ENCODE measurements at regions of chr13 and their contacts with region 1.

Region 1: DNA sequence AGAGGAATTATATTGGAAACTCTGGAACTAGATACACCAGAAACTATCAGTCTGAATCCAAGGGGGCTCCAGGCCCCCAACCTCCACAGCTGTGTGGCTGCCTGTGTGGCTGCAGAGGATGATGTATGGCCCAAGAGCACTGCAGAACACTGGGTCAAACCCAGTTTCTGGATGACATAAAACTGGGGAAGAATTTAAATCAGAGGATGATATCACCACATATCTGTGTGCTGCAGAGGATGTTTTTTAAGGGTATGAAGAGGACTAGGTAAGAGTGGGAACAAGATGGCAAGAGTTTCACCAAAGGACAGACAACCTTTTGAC is 226.4 kb downstream of the SUCLA2 start:
- DNase-seq: no peak
- ATAC-seq: no peak
- H3K4me3 ChIP-seq: no peak overlapping the region
- H3K27ac ChIP-seq: no peak overlapping the region
- H3K4me1 ChIP-seq: no peaks in the 10 kb centered on the region
- H3K27me3 ChIP-seq: no peaks in the 10 kb centered on the region
- CTCF ChIP-seq: no peak

Region 2: GRCh38 chr13:46759846-46760245 is 1014.8 kb before region 1 on chr13:
- CTCF ChIA-PET with region 1: no interaction called
- POLR2A ChIA-PET with region 1: no interaction called
- in situ Hi-C with region 1: no loop called
- intact Hi-C with region 1: loop called (anchors 10 kb)
- DNase-seq: no peak
- ATAC-seq: no peak
- H3K4me3 ChIP-seq: no peak overlapping the region
- H3K27ac ChIP-seq: no peak overlapping the region
- H3K4me1 ChIP-seq: no peaks in the 10 kb centered on the region
- H3K27me3 ChIP-seq: no peaks in the 10 kb centered on the region
- CTCF ChIP-seq: no peak

Region 3: DNA sequence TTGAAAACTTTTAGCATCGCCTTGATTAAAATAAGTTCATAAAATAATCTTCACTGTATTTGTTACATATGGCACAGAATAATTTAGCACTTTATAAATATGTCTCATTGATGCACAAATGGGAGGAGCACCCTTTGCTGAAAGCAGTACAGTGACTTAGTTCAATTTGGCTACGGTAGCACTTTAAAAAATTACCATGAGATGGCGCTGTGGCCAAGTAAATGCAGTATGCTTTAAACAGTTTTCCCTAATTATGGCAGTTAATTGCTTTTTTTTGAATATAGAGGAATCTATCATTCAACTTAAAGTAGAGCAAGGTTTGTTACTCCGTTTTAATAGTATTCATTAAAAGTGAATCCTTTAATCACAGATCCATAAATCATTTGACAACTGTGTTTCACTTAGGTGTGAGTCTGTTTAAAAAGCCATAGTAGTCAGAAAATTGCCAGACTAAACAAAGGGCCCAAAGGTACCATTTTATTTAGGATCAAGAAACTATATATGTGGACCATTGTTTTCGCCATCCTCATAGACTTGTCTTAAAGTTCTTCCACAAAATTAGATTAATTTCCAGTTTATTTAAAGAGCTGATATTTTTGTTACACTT is 942.9 kb before region 1 on chr13:
- CTCF ChIA-PET with region 1: no interaction called
- POLR2A ChIA-PET with region 1: no interaction called
- in situ Hi-C with region 1: no loop called
- intact Hi-C with region 1: loop called (anchors 5 kb)
- DNase-seq: peak; percentile 32
- ATAC-seq: no peak; the same call in 1 of the 2 replicates
- H3K4me3 ChIP-seq: no peak overlapping the region
- H3K27ac ChIP-seq: no peak overlapping the region
- H3K4me1 ChIP-seq: no peaks in the 10 kb centered on the region
- H3K27me3 ChIP-seq: no peaks in the 10 kb centered on the region; the same call in 1 of the 2 replicates
- CTCF ChIP-seq: peak; percentile 66; the same call in 1 of the 2 replicates

Region 4: GRCh38 chr13:46975173-46975572 is 799.5 kb before region 1 on chr13:
- CTCF ChIA-PET with region 1: no interaction called
- POLR2A ChIA-PET with region 1: no interaction called
- in situ Hi-C with region 1: no loop called
- intact Hi-C with region 1: loop called (anchors 10 kb)
- DNase-seq: no peak
- ATAC-seq: no peak
- H3K4me3 ChIP-seq: no peak overlapping the region
- H3K27ac ChIP-seq: no peak overlapping the region
- H3K4me1 ChIP-seq: no peaks in the 10 kb centered on the region
- H3K27me3 ChIP-seq: no peaks in the 10 kb centered on the region
- CTCF ChIP-seq: no peak

Region 5: GRCh38 chr13:47955836-47956235 is 181.2 kb after region 1 on chr13:
- CTCF ChIA-PET with region 1: no interaction called
- POLR2A ChIA-PET with region 1: no interaction called
- in situ Hi-C with region 1: no loop called
- intact Hi-C with region 1: no loop called
- DNase-seq: no peak
- ATAC-seq: no peak
- H3K4me3 ChIP-seq: no peak overlapping the region
- H3K27ac ChIP-seq: no peak overlapping the region
- H3K4me1 ChIP-seq: no peaks in the 10 kb centered on the region
- H3K27me3 ChIP-seq: no peaks in the 10 kb centered on the region
- CTCF ChIP-seq: no peak

Region 6: DNA sequence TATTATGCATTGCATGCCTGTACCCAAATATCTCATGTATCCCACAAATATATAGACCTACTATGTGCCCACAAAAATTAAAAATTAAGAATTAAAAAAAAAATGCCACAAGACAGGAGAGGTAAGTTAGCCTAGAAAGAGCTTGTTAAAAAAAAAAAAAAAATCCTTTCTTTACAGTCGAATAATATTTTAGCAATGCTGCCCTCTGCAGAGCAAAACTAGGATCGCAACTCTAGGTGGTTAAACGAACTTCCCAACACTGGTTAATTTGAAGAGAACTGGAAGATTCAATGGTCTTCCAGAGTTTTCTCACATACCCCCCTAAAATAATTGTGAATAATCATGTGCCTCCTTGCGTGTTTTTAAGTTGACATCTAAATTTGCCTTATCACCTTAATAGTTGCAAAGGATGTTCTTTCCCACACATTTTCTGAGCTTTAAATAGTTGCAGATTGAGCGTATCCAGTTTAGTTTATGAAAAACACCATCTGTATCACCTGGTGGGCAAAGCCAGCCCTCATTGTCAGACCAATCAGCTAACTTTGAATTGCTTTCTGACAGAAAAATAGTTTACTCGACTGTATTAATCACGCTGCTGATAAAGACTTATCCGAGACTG is 805.7 kb after region 1 on chr13:
- CTCF ChIA-PET with region 1: no interaction called
- POLR2A ChIA-PET with region 1: interaction called, 15 read pairs
- in situ Hi-C with region 1: no loop called
- intact Hi-C with region 1: no loop called
- DNase-seq: peak; percentile 45
- ATAC-seq: peak; percentile 65; the same call in 1 of the 2 replicates
- H3K4me3 ChIP-seq: no peak overlapping the region
- H3K27ac ChIP-seq: no peak overlapping the region
- H3K4me1 ChIP-seq: peaks cover 6% of the 10 kb centered on the region; the same call in 1 of the 2 replicates
- H3K27me3 ChIP-seq: no peaks in the 10 kb centered on the region
- CTCF ChIP-seq: peak; percentile 67; the same call in 1 of the 2 replicates